ENCODE measurements at regions of chr9 and their contacts with region 1.

Region 1: DNA sequence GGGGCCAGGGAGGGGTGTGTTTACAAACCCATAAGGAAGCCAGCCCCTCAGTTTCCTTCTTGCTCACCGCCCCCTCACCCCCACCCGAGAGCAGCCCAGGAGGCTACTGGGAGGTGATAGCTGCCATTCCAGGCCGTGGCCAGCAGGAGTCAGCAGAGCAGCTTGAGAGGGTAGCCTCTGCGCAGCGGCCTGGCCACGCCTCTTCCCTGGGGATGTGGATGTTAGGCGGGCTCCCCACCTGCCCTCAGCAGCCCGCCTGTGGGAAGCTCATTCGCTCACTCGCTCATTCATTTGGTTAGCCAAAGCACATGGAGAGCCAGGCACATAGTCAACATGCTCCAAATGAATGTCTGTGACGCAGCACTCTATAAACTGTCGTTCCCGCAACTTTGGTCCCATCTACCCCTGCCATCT is 6.1 kb upstream of the DPM2 start:
- DNase-seq: peak; percentile 93
- ATAC-seq: peak; percentile 91
- H3K4me3 ChIP-seq: no peak overlapping the region
- H3K27ac ChIP-seq: no peak overlapping the region
- H3K4me1 ChIP-seq: no peaks in the 10 kb centered on the region
- H3K27me3 ChIP-seq: no peaks in the 10 kb centered on the region
- CTCF ChIP-seq: peak; percentile 92

Region 2: GRCh38 chr9:127283917-127284316 is 659.8 kb before region 1 on chr9:
- intact Hi-C with region 1: no loop called
- DNase-seq: no peak
- ATAC-seq: peak; percentile 63
- H3K4me3 ChIP-seq: no peak overlapping the region
- H3K27ac ChIP-seq: no peak overlapping the region
- H3K4me1 ChIP-seq: no peaks in the 10 kb centered on the region
- H3K27me3 ChIP-seq: no peaks in the 10 kb centered on the region
- CTCF ChIP-seq: peak; percentile 34

Region 3: DNA sequence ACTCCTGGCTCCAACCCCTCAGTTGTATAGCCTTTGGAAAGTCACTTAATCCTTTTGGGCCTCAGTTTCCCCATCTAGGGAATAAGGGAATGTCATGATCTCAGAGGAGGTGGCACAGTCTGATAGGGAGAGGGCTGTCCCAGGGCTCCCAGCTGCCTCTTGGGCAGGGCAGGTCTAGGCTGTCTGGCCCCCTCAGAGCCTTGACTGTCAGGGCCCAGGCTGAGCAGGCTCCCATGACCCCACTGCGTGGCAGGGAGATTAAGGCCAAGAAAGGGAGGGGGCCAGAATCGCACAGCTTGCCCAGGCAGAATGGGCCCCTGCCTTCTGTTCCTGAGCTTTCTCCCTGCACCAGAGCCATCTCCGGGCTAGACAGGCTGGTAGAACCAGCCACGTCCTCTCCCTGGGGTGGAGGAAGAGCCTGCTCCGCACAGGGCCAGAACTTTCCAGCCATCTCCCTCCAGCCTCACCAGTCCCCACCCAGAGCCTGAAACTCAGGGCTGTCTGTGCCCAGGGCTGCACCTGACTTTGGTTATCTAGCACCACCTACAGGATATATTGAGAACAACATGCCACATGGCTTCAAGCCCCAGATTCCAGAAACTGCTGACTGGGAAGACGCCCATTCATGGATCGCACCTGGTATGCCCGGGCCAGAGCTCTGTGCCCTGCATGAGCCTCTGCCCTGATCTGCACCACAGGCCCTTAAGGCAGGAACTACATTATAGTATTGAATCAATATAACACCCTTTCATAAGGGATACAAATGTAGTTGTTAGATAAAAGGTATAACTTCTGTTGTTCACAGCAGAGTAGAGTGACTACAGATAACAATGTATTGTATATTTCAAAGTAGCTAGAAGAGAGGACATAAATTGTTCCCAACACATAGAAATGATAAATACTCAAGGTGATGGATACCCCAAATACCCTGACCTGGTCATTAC is 91.4 kb after region 1 on chr9:
- intact Hi-C with region 1: loop called (anchors 5 kb)
- DNase-seq: peak; percentile 78
- ATAC-seq: peak; percentile 99
- H3K4me3 ChIP-seq: no peak overlapping the region
- H3K27ac ChIP-seq: no peak overlapping the region
- H3K4me1 ChIP-seq: no peaks in the 10 kb centered on the region
- H3K27me3 ChIP-seq: no peaks in the 10 kb centered on the region
- CTCF ChIP-seq: peak; percentile 90

Region 4: DNA sequence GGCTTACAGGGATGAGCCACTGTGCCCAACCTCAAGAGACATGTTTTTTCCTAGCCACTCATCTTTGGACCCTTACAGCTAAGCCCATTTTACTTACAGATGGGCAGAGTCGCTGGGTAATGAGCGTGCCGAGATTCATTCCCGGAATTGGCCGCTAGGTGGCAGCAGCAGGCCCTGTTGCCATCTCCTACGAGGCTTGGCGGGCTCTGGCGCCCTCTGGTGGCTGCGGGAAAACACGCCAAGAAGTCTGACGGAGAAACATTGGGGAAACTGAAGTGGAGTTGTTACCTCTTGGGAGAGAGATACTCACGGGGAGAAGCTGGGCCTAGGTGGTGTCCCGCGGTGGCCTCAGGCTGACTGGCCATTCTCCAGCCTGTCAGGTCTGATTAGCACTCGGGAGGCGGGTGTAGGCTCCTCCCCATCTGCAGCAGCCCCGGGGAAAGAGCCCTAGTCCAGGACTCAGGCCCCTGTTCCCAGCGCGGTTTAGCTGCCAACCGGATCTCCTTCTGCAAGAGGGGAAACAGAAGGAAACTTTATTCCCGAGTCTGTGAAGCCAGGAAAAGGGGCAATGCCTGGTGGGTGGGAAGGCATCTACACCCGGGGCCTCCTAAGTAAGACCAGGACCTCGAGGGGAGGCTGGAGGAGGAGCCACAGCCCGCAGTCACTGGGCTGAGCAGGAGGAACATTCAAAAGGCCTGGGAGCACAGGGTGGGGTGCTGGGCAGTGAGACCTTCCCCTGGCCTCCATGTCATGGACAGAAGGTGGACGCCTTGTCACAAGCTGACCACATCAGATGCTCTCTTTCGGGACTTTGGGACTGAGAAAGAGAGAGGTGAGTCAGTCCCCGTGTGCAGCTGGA is 174.1 kb after region 1 on chr9:
- intact Hi-C with region 1: loop called (anchors 10 kb)
- DNase-seq: peak; percentile 96
- ATAC-seq: peak; percentile 92
- H3K4me3 ChIP-seq: no peak overlapping the region
- H3K27ac ChIP-seq: no peak overlapping the region
- H3K4me1 ChIP-seq: peaks cover 11% of the 10 kb centered on the region
- H3K27me3 ChIP-seq: no peaks in the 10 kb centered on the region
- CTCF ChIP-seq: peak; percentile 100

Measured in upper lobe of right lung (tissue), 1 donor.